ENCODE measurements at regions of chr1 and their contacts with region 1.

Region 1: DNA sequence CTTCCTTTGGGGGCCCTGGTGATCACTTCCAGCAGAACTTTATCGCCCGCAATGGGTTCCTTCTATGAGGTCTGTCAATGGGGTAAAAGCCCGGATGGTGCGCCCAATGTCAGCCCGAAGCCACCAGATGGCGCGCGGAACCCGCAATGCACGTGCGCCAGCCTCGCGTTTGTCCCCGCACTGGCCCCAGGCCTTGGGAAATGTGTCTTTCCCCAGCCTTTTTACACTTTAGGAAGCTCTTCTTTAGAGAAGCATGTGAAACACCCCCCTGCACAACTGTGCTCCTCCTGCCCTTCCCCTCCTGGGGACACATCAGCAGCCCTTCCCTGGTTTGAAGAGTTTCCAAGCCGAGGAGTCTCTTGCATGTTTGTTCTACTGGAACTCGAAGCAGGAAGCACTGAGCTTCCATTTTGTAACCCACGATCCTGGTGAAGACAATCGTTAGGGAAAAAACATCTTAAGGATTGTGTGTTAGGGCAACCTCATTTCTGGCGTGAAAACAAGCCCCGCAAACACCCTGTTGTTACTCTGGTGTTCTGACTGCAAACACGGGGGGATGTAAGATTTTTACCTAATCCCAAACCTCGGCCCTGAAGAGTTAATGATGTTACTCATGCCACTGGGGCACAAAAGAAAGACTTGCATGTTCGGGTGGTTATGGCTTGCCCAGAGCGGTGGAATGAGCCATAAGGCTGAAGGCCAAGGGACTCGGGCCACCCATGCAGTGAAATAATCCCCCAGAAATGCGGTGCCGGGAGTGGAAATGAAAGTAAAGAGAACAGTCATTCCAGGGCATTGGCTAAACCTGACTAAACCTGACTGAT is 20.4 kb upstream of the TARBP1 start:
- DNase-seq: peak; percentile 90
- H3K4me3 Mint-ChIP-seq: peak overlapping the region; percentile 34
- H3K27ac Mint-ChIP-seq: peak overlapping the region; percentile 85
- H3K4me1 Mint-ChIP-seq: peaks cover 71% of the 10 kb centered on the region
- H3K27me3 Mint-ChIP-seq: peaks cover 4% of the 10 kb centered on the region

Region 2: GRCh38 chr1:234521807-234522195 is 22.5 kb after region 1 on chr1:
- CTCF ChIA-PET with region 1: no interaction called
- POLR2A ChIA-PET with region 1: interaction called, 3 read pairs
- intact Hi-C with region 1: loop called (anchors 1 kb)
- DNase-seq: no peak
- H3K4me3 Mint-ChIP-seq: no peak overlapping the region
- H3K27ac Mint-ChIP-seq: no peak overlapping the region
- H3K4me1 Mint-ChIP-seq: peaks cover 11% of the 10 kb centered on the region
- H3K27me3 Mint-ChIP-seq: peaks cover 5% of the 10 kb centered on the region

Region 3: DNA sequence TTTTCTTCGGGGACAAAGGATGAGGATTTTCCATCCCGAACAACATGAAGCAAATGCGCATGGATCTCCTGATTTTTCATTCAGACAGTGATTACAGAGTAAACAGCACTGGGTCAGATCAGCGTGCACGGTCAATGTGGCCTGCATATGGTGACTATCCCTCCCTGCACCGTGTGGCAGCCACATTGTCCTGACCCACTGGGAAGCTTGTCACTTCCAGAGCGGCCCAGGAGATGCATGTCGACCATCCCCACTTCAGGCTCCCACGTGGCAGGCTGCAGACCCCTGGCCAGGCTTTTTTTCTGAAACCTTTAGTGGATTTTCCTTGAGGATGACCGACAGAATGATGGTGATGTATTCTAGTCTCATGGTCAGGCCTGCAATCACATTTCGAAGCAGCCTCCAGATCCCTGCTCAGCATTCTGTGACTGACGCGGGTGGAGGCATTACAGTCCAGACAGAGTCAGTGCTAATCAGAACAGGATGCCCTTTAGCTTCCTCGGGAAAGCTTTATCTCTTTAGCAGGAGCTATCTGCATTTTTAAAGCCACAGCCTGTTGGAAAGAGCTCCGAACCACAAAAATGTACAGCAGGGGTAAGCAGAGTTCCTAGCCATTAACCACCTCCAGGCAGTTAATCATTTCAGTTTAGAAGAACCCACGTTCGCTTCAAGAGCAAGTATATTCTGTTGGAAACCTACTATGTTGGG is 54.0 kb after region 1 on chr1:
- CTCF ChIA-PET with region 1: no interaction called
- POLR2A ChIA-PET with region 1: no interaction called
- intact Hi-C with region 1: no loop called
- DNase-seq: no peak
- H3K4me3 Mint-ChIP-seq: no peak overlapping the region
- H3K27ac Mint-ChIP-seq: no peak overlapping the region
- H3K4me1 Mint-ChIP-seq: no peaks in the 10 kb centered on the region
- H3K27me3 Mint-ChIP-seq: no peaks in the 10 kb centered on the region

Region 4: GRCh38 chr1:234722904-234723720 is 223.8 kb after region 1 on chr1:
- CTCF ChIA-PET with region 1: no interaction called
- POLR2A ChIA-PET with region 1: interaction called, 10 read pairs
- intact Hi-C with region 1: loop called (anchors 1 kb)
- DNase-seq: peak; percentile 91
- H3K4me3 Mint-ChIP-seq: peak overlapping the region; percentile 60
- H3K27ac Mint-ChIP-seq: peak overlapping the region; percentile 96
- H3K4me1 Mint-ChIP-seq: peaks cover 66% of the 10 kb centered on the region
- H3K27me3 Mint-ChIP-seq: no peaks in the 10 kb centered on the region

Region 5: GRCh38 chr1:234842726-234843641 is 343.7 kb after region 1 on chr1:
- CTCF ChIA-PET with region 1: no interaction called
- POLR2A ChIA-PET with region 1: interaction called, 9 read pairs
- intact Hi-C with region 1: loop called (anchors 1 kb)
- DNase-seq: peak; percentile 93
- H3K4me3 Mint-ChIP-seq: peak overlapping the region; percentile 71
- H3K27ac Mint-ChIP-seq: peak overlapping the region; percentile 99
- H3K4me1 Mint-ChIP-seq: peaks cover 87% of the 10 kb centered on the region
- H3K27me3 Mint-ChIP-seq: no peaks in the 10 kb centered on the region

Region 6: GRCh38 chr1:235011599-235012435 is 512.5 kb after region 1 on chr1:
- CTCF ChIA-PET with region 1: interaction called, 7 read pairs
- POLR2A ChIA-PET with region 1: interaction called, 9 read pairs
- intact Hi-C with region 1: loop called (anchors 1 kb)
- DNase-seq: peak; percentile 99
- H3K4me3 Mint-ChIP-seq: peak overlapping the region; percentile 56
- H3K27ac Mint-ChIP-seq: peak overlapping the region; percentile 97
- H3K4me1 Mint-ChIP-seq: peaks cover 90% of the 10 kb centered on the region
- H3K27me3 Mint-ChIP-seq: peaks cover 2% of the 10 kb centered on the region

Region 7: DNA sequence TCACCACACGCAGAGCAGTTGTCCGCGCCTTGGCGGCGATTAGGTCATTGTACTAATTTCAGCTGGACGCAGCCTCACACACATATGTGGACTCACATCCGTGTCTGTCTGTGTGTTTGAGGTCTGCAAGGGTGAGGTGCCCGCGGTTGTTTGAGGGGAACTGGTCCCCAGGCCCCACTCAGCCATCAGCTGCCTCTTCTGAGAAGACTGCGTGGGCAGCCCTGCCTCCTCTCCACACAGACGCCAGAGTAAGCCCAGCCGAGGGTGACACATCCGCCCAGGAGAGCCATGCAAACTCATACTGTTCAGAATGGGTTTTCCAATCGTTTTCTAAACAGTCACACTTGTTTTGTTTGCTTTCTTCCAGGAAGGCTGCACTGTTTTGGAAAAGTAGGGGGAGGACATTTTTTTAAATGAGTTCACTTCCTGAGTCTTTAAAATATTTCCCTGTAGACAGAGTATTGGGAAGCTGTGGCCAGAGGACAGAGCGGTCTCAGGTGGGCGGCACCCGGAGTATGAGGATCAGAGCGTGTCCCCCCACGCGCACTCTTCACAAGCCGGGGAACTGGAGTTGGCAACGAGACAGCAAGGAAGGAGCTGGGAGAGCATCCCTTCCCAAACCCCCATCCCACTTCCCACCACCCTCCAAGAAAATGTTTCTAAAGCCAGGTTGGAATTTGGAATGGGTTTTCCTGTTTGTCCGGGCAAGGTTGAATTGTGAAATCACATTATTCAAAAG is 576.0 kb after region 1 on chr1:
- CTCF ChIA-PET with region 1: interaction called, 10 read pairs
- POLR2A ChIA-PET with region 1: interaction called, 3 read pairs
- intact Hi-C with region 1: loop called (anchors 1 kb)
- DNase-seq: peak; percentile 95
- H3K4me3 Mint-ChIP-seq: peak overlapping the region; percentile 74
- H3K27ac Mint-ChIP-seq: peak overlapping the region; percentile 99
- H3K4me1 Mint-ChIP-seq: peaks cover 32% of the 10 kb centered on the region
- H3K27me3 Mint-ChIP-seq: no peaks in the 10 kb centered on the region